ENCODE measurements at regions of chr18 and their contacts with region 1.

Region 1: GRCh38 chr18:26710470-26711096 is 154.9 kb downstream of the AQP4 start:
- DNase-seq: no peak
- ATAC-seq: no peak
- H3K4me3 ChIP-seq: no peak overlapping the region
- H3K27ac ChIP-seq: no peak overlapping the region
- H3K4me1 ChIP-seq: peaks cover 0 to 22% (median 0%) of the 10 kb centered on the region in 12 donors
- H3K27me3 ChIP-seq: peaks cover 0 to 9% (median 0%) of the 10 kb centered on the region in 9 donors
- CTCF ChIP-seq: no peak
- POLR2A ChIP-seq: no peak

Region 2: GRCh38 chr18:26667046-26667445 is 43.5 kb before region 1 on chr18:
- intact Hi-C with region 1: loop called in 1 of 10 experiments (anchors 5 kb)
- DNase-seq: no peak
- ATAC-seq: no peak
- H3K4me3 ChIP-seq: no peak overlapping the region
- H3K27ac ChIP-seq: no peak overlapping the region
- H3K4me1 ChIP-seq: no peaks in the 10 kb centered on the region
- H3K27me3 ChIP-seq: peaks cover 0 to 40% (median 0%) of the 10 kb centered on the region in 9 donors
- CTCF ChIP-seq: no peak
- POLR2A ChIP-seq: no peak

Region 3: GRCh38 chr18:26677957-26678356 is 32.6 kb before region 1 on chr18:
- intact Hi-C with region 1: loop called in 1 of 10 experiments (anchors 5 kb)
- DNase-seq: no peak
- ATAC-seq: peak in 2 of 4 donors; percentile 36 to 87
- H3K4me3 ChIP-seq: no peak overlapping the region
- H3K27ac ChIP-seq: no peak overlapping the region
- H3K4me1 ChIP-seq: no peaks in the 10 kb centered on the region
- H3K27me3 ChIP-seq: no peaks in the 10 kb centered on the region
- CTCF ChIP-seq: no peak
- POLR2A ChIP-seq: no peak

Region 4: DNA sequence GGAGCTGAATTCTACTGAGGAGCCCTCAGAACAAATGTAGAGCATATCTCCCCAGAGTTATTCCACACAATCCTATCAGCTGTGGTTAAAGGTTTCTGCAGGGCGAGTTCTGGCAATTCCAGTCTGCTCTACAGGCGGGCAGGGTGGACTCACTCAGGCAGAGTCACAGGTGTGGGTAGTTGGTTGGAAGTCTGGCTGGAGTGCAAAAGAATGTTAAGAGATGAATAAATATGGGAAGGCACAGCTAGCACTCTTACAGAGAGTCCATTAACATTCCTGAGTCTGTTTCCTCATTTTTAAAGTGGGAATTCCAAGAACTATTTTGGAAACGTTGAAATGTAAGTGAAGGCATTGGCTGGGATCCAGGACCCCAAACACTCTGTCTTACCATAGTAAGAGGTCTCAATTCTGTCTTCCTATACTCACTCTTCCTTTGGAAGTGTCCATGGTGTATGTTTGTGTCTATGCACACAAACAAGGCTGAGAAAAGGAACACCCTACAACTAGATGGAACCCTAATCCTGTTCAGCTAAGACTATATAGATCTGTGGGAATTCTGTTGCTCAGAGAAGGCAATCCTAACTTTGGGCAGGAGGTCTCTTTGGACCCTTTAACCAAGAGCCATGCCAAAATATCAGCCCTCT is 218.2 kb after region 1 on chr18:
- intact Hi-C with region 1: no loop called
- DNase-seq: no peak
- ATAC-seq: no peak
- H3K4me3 ChIP-seq: no peak overlapping the region
- H3K27ac ChIP-seq: no peak overlapping the region
- H3K4me1 ChIP-seq: no peaks in the 10 kb centered on the region
- H3K27me3 ChIP-seq: no peaks in the 10 kb centered on the region
- CTCF ChIP-seq: no peak
- POLR2A ChIP-seq: no peak

Measured in heart left ventricle (tissue), 16 donors.